ENCODE measurements at regions of chr15 and their contacts with region 1.

Region 1: GRCh38 chr15:34927726-34928125 is 41.8 kb downstream of the AQR start:
- DNase-seq: no peak
- ATAC-seq: peak in 1 of 4 donors; percentile 39
- H3K4me3 ChIP-seq: no peak overlapping the region
- H3K27ac ChIP-seq: no peak overlapping the region
- H3K4me1 ChIP-seq: no peaks in the 10 kb centered on the region
- H3K27me3 ChIP-seq: no peaks in the 10 kb centered on the region
- CTCF ChIP-seq: no peak
- POLR2A ChIP-seq: no peak

Region 2: DNA sequence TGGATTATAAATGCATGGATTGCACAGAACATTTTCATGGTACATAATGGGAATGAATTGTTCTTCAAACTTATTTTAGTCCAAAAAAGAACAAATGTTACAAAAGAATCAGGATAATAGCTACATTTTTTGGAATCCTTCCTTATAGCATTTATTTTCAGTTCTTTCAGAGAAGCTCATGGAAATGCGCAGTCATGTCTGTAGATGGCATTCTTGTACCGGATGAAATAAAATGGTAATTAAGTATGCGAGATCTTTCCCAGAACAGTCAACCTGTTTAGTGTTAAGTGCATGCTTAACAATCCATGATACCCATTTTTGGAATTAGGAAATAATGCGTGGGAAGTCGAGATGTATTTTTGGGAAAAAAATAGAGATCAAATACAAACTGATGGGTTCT is 306.1 kb before region 1 on chr15:
- intact Hi-C with region 1: loop called in 9 of 10 experiments (anchors 5 kb)
- DNase-seq: no peak
- ATAC-seq: peak in 1 of 4 donors; percentile 55
- H3K4me3 ChIP-seq: no peak overlapping the region
- H3K27ac ChIP-seq: no peak overlapping the region
- H3K4me1 ChIP-seq: peaks cover 0 to 13% (median 0%) of the 10 kb centered on the region in 12 donors
- H3K27me3 ChIP-seq: peaks cover 0 to 4% (median 0%) of the 10 kb centered on the region in 9 donors
- CTCF ChIP-seq: peak; percentile 11 to 56 (median 43)
- POLR2A ChIP-seq: no peak

Region 3: DNA sequence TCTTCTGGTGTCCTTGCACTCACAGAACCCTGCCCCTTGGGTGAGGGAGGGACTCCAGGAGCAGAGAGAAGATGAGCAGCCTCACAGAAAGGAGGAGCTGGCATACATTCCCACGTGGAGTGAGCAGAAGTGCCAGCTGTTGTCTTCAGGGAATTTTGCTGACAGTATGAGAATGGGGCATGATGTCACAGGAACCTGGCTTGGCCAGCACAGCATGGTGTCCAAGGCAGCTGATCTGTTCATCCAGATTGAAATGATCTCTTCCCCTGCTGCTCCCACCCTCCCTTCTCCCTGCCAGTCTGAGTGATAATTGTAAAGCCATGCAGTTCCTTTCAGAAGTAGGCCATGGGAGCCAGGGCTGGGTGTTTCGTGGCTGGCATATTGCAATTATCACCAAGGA is 226.2 kb before region 1 on chr15:
- intact Hi-C with region 1: loop called in 4 of 10 experiments (anchors 5 kb)
- DNase-seq: no peak
- ATAC-seq: no peak
- H3K4me3 ChIP-seq: no peak overlapping the region
- H3K27ac ChIP-seq: no peak overlapping the region
- H3K4me1 ChIP-seq: no peaks in the 10 kb centered on the region
- H3K27me3 ChIP-seq: no peaks in the 10 kb centered on the region
- CTCF ChIP-seq: no peak
- POLR2A ChIP-seq: no peak

Measured in heart left ventricle (tissue), 16 donors.